H1 (cell line): ENCODE measurements at regions of chr3 and their contacts with region 1.

Region 1: GRCh38 chr3:40464339-40465110 is 7.4 kb downstream of the RPL14 start:
- DNase-seq: no peak
- H3K4me3 ChIP-seq: no peak overlapping the region
- H3K27ac ChIP-seq: no peak overlapping the region
- H3K4me1 ChIP-seq: no peaks in the 10 kb centered on the region
- H3K27me3 ChIP-seq: no peaks in the 10 kb centered on the region
- CTCF ChIP-seq: no peak
- EP300 ChIP-seq: no peak
- POLR2A ChIP-seq: no peak; a peak in 2 of 3 replicates
- RAD21 ChIP-seq: no peak

Region 2: GRCh38 chr3:40476478-40477470 is 12.2 kb after region 1 on chr3 and contains the start of gene ZNF619:
- CTCF ChIA-PET with region 1: interaction called, 4 read pairs
- POLR2A ChIA-PET with region 1: interaction called, 64 read pairs
- DNase-seq: peak in 1 of 2 experiments; percentile 80
- H3K4me3 ChIP-seq: peak within 1 kb of the TSS; percentile 36 to 88 (median 64)
- H3K27ac ChIP-seq: peak within 1 kb of the TSS; percentile 67; the same call in 1 of the 2 replicates
- H3K4me1 ChIP-seq: peaks cover 0 to 8% (median 3%) of the 10 kb centered on the region in 4 experiments; a peak in 2 of 7 replicates
- H3K27me3 ChIP-seq: no peaks in the 10 kb centered on the region
- CTCF ChIP-seq: no peak
- EP300 ChIP-seq: no peak
- POLR2A ChIP-seq: peak in 1 of 2 experiments; percentile 60; a peak in 2 of 3 replicates
- RAD21 ChIP-seq: no peak
- total RNA-seq, gene ZNF619: 7.0 and 8.2 TPM in 2 replicates

Region 3: DNA sequence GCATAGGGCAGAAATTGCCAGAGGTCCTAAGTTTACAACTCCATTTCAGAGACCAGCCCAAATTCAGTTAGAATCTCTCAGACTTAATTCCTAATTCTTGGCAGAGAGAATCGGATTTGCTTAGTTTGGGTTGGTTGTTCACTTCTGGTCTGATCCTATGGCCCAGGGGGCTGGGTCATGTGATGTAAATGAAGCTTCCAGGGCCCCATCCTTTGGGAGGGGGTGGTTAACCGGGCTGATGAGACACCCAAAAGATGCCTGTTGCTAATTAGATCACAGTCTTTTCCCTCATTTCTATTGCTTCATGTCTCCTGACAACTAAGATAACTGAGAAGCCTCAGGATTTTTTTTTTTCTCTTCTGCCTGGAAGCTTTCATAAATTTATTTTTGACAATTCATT is 30.2 kb after region 1 on chr3:
- CTCF ChIA-PET with region 1: interaction called, 5 read pairs
- POLR2A ChIA-PET with region 1: interaction called, 22 read pairs
- DNase-seq: no peak
- H3K4me3 ChIP-seq: no peak overlapping the region
- H3K27ac ChIP-seq: no peak overlapping the region
- H3K4me1 ChIP-seq: no peaks in the 10 kb centered on the region
- H3K27me3 ChIP-seq: peaks cover 0 to 2% (median 0%) of the 10 kb centered on the region in 4 experiments; a peak in 1 of 7 replicates
- CTCF ChIP-seq: no peak
- EP300 ChIP-seq: no peak
- POLR2A ChIP-seq: no peak
- RAD21 ChIP-seq: no peak

Region 4: DNA sequence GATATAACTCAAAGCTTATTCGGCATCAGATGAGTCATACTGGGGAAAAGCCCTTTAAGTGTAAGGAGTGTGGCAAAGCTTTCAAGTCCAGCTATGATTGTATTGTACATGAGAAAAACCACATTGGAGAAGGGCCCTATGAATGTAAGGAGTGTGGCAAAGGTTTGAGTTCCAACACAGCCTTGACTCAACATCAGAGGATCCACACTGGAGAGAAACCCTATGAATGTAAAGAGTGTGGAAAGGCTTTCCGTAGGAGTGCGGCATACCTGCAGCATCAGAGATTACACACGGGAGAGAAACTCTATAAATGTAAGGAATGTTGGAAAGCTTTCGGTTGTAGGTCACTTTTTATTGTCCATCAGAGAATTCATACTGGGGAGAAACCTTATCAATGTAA is 67.7 kb after region 1 on chr3:
- CTCF ChIA-PET with region 1: no interaction called
- POLR2A ChIA-PET with region 1: no interaction called
- DNase-seq: no peak
- H3K4me3 ChIP-seq: no peak overlapping the region
- H3K27ac ChIP-seq: no peak overlapping the region
- H3K4me1 ChIP-seq: no peaks in the 10 kb centered on the region
- H3K27me3 ChIP-seq: no peaks in the 10 kb centered on the region
- CTCF ChIP-seq: no peak
- EP300 ChIP-seq: no peak
- POLR2A ChIP-seq: no peak
- RAD21 ChIP-seq: no peak